ENCODE measurements at regions of chr13 and their contacts with region 1.

Region 1: GRCh38 chr13:48828962-48829421 is 146.7 kb upstream of the FNDC3A start:
- DNase-seq: peak; percentile 45
- H3K4me3 Mint-ChIP-seq: no peak overlapping the region
- H3K27ac Mint-ChIP-seq: no peak overlapping the region
- H3K4me1 Mint-ChIP-seq: peaks cover 48% of the 10 kb centered on the region
- H3K27me3 Mint-ChIP-seq: no peaks in the 10 kb centered on the region

Region 2: DNA sequence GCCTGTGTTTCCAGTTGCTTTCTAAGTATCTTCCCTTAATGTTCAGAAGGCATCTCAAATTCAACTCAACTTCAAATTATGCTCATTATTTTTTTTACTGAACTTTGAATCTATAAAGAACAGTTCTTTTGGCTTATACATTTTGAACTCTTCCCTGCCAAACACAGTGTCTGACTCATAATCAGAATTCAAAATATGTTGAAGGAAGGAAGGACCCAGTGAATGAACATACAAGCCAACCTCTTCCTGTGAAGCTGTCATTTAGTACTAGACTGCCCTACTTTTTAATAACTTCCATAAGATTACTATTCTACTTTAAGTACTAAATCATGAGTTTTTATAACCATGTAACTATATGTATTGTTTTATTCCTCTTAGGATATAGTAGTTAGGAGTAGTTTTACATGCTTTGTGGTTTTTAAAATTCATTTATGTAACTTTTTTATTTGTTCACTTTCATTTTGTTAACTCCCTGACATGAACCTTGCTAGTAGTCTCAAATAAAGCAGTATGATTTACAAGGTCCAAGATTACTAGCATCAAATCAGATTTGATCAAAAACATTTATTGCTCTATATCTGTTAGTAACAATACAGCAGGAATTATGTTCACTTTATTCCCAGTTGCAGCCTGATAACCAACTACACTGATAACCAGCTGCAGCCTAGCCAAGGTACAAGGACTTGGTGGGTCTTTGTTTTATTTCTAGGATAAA is 785.0 kb before region 1 on chr13:
- CTCF ChIA-PET with region 1: no interaction called
- intact Hi-C with region 1: no loop called
- DNase-seq: no peak
- H3K4me3 Mint-ChIP-seq: no peak overlapping the region
- H3K27ac Mint-ChIP-seq: peak overlapping the region; percentile 80
- H3K4me1 Mint-ChIP-seq: peaks cover 39% of the 10 kb centered on the region
- H3K27me3 Mint-ChIP-seq: no peaks in the 10 kb centered on the region

Region 3: DNA sequence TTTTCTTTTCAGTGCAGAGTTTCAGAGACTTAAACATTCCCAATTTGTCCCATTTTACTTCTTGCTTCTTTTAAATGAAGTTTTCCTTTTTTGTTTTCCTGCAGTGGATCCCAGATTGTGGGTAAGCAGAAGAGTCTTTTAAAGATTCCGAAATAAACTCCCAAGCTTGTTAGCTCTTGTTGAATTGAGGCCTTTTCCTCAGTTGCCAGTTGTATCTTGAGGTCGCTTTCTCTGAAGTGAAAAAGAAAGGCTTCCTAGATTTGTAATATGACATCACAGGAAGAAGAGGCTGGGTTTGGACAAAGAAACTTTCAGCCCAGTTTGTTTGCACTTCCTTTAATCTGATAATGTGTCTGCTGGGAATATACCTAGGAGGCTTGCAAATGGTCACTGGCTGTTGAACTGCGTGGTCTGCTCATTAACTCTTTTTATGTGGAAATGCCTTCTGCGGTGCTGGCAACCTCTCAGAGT is 416.1 kb before region 1 on chr13 and contains the start of gene LPAR6:
- CTCF ChIA-PET with region 1: no interaction called
- intact Hi-C with region 1: no loop called
- DNase-seq: peak; percentile 20
- H3K4me3 Mint-ChIP-seq: peak within 1 kb of the TSS; percentile 84
- H3K27ac Mint-ChIP-seq: peak within 1 kb of the TSS; percentile 92
- H3K4me1 Mint-ChIP-seq: peaks cover 33% of the 10 kb centered on the region
- H3K27me3 Mint-ChIP-seq: no peaks in the 10 kb centered on the region
- total RNA-seq, gene LPAR6: 6.1 to 6.6 TPM

Region 4: GRCh38 chr13:48804821-48805601 is 24.0 kb before region 1 on chr13:
- CTCF ChIA-PET with region 1: no interaction called
- intact Hi-C with region 1: loop called (anchors 1 kb)
- DNase-seq: peak; percentile 9
- H3K4me3 Mint-ChIP-seq: no peak overlapping the region
- H3K27ac Mint-ChIP-seq: no peak overlapping the region
- H3K4me1 Mint-ChIP-seq: peaks cover 27% of the 10 kb centered on the region
- H3K27me3 Mint-ChIP-seq: no peaks in the 10 kb centered on the region

Region 5: GRCh38 chr13:48859272-48860105 is 30.5 kb after region 1 on chr13:
- CTCF ChIA-PET with region 1: no interaction called
- intact Hi-C with region 1: loop called (anchors 2 kb)
- DNase-seq: no peak
- H3K4me3 Mint-ChIP-seq: no peak overlapping the region
- H3K27ac Mint-ChIP-seq: no peak overlapping the region
- H3K4me1 Mint-ChIP-seq: peaks cover 23% of the 10 kb centered on the region
- H3K27me3 Mint-ChIP-seq: no peaks in the 10 kb centered on the region

Region 6: DNA sequence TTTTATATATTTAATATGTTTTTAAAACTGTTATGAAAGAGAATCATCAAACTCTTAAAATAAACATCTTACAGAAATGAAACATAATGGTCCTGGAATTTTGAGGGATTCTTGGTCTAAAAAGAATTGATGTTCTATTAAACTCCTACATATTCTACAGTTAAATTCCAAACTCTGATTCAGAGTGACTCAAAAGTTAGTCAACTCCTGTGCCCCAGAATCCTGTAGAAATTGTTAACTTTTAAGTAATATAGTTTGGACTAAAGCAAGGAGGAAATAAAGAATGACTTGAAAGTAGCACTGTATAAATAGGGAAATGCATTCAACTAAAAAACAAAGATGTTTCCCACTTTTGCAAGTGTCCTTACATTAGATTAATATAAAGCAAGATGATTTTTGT is 194.5 kb after region 1 on chr13:
- CTCF ChIA-PET with region 1: no interaction called
- intact Hi-C with region 1: loop called (anchors 5 kb)
- DNase-seq: no peak
- H3K4me3 Mint-ChIP-seq: no peak overlapping the region
- H3K27ac Mint-ChIP-seq: no peak overlapping the region
- H3K4me1 Mint-ChIP-seq: peaks cover 30% of the 10 kb centered on the region
- H3K27me3 Mint-ChIP-seq: no peaks in the 10 kb centered on the region

Measured in activated naive CD4-positive, alpha-beta T cell treated with anti-CD3 and anti-CD28 coated beads for 36 hours (primary cell).